HepG2 (cell line): ENCODE measurements at regions of chr2 and their contacts with region 1.

Region 1: DNA sequence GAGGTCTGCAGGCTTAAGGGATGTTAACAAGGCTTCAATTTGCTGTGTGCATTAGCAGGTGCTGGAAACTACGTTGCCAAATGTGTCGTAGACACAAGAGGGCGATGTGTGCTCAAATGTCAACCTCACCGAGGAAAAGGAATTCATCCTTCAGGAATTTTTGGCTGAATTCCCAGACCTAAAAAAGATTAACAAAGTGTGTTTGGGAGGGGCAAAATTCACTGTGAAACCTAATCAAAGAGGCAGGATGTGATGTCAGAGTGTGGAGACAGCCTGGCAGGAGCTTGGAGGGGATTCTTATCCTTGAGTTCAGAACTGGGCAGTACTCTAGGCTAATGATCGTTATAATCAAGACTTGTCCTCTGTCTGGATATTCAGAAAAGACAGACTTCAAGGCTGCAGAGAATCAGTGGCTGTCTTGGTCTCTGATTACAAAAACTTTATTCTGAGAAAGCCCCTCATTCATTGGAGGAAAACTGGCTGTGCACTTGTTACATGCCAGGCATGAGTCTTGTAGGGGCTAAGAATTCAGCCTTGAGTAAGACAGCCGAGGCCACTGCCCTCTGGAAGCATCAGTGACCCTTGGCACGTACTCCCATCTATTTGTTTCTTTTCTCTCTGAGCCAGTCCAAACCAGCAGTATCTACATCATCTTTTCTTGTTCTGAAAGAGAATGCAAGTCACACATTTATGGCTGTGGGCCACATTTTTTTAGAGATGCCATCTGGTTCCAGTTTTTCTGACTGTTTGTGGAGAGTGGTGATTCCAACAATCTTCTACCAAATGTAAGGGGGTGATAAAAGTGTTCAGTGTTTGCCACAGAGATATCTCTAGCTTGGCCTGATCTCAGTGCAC is 18.7 kb upstream of the SCYGR1 start:
- DNase-seq: peak; percentile 99
- ATAC-seq: peak; percentile 93
- H3K4me3 ChIP-seq: peak overlapping the region in 2 of 3 experiments; percentile 2 to 24; a peak in 1 of 6 replicates
- H3K27ac ChIP-seq: peak overlapping the region; percentile 51
- H3K4me1 ChIP-seq: peaks cover 20% of the 10 kb centered on the region
- H3K27me3 ChIP-seq: peaks cover 0 to 4% of the 10 kb centered on the region in 2 experiments; a peak in 1 of 5 replicates
- CTCF ChIP-seq: peak; percentile 98
- EP300 ChIP-seq: peak in 1 of 2 experiments; percentile 82; a peak in 2 of 4 replicates
- POLR2A ChIP-seq: peak in 1 of 2 experiments; percentile 29; a peak in 1 of 4 replicates
- RAD21 ChIP-seq: peak; percentile 97

Region 2: DNA sequence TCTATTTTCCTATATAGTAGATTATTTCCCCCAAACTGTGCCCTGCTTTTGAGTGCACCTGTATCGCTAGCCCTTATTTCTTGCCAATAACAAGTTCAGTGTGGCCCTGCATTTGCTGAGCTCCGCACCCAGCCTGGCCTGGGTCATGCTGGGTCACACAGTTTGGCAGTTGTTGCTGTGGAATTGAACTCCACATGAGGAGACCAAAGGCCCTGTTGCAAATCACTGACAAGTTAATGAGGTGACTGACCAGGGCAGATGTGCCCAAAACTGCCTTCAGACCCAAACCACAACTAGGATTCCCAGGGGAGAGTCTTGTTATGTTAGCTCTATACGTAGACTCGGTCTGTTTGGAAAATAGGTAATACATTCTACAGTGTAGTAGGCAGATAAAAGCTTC is 273.4 kb before region 1 on chr2:
- CTCF ChIA-PET with region 1: no interaction called
- POLR2A ChIA-PET with region 1: no interaction called
- in situ Hi-C with region 1: no loop called
- intact Hi-C with region 1: loop called (anchors 2 kb)
- DNase-seq: no peak
- ATAC-seq: no peak
- H3K4me3 ChIP-seq: no peak overlapping the region
- H3K27ac ChIP-seq: no peak overlapping the region
- H3K4me1 ChIP-seq: no peaks in the 10 kb centered on the region
- H3K27me3 ChIP-seq: peaks cover 2 to 54% of the 10 kb centered on the region in 2 experiments; a peak in 3 of 5 replicates
- CTCF ChIP-seq: no peak
- EP300 ChIP-seq: no peak
- POLR2A ChIP-seq: no peak
- RAD21 ChIP-seq: no peak

Region 3: GRCh38 chr2:227450926-227451654 is 44.7 kb after region 1 on chr2:
- CTCF ChIA-PET with region 1: interaction called, 3 read pairs
- POLR2A ChIA-PET with region 1: no interaction called
- in situ Hi-C with region 1: no loop called
- intact Hi-C with region 1: loop called (anchors 1 kb)
- DNase-seq: peak; percentile 99
- ATAC-seq: peak; percentile 93
- H3K4me3 ChIP-seq: peak overlapping the region in 1 of 3 experiments; percentile 17; a peak in 1 of 6 replicates
- H3K27ac ChIP-seq: peak overlapping the region; percentile 90
- H3K4me1 ChIP-seq: peaks cover 84% of the 10 kb centered on the region
- H3K27me3 ChIP-seq: no peaks in the 10 kb centered on the region
- CTCF ChIP-seq: no peak
- EP300 ChIP-seq: peak; percentile 92 to 98
- POLR2A ChIP-seq: peak in 1 of 2 experiments; percentile 50; a peak in 1 of 4 replicates
- RAD21 ChIP-seq: no peak; the same call in 1 of the 2 replicates

Region 4: DNA sequence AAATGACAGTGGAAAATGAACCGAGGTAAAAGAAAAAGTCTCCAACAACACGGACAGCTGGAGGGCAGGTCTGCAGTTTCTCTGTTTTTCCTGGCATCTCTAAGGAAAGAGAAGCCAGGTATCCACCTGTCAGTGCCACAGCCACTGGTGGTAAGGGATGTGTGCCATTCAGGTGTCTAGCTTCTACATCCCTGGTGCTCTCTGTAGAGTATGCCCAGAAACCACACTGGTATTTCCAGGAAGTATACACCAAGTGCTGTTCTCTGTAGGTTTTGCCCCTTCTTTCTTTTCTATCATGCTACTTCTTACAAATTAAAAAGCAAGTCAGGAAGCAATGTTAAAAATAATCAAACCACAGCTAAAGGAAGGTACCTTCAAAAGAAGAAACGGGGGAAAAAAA is 58.0 kb after region 1 on chr2:
- CTCF ChIA-PET with region 1: no interaction called
- POLR2A ChIA-PET with region 1: interaction called, 6 read pairs
- in situ Hi-C with region 1: loop called (anchors 5 kb)
- intact Hi-C with region 1: loop called (anchors 1 kb)
- DNase-seq: no peak
- ATAC-seq: no peak
- H3K4me3 ChIP-seq: no peak overlapping the region
- H3K27ac ChIP-seq: no peak overlapping the region
- H3K4me1 ChIP-seq: peaks cover 71% of the 10 kb centered on the region
- H3K27me3 ChIP-seq: no peaks in the 10 kb centered on the region
- CTCF ChIP-seq: no peak
- EP300 ChIP-seq: no peak
- POLR2A ChIP-seq: no peak
- RAD21 ChIP-seq: no peak

Region 5: DNA sequence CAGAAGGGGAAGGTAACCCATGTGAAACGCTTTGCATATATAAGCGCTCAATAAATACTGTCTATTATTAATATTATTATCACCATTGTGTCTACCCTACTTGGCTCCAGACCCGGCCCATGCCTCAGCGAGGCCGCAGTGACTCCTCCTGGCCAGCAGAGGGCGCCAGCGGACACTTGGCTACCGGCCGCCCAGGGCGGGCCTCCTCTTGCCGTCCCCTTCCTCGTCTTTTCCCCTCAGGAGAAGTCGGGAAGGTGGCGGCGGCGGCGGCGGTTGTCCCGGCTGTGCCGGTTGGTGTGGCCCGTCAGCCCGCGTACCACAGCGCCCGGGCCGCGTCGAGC is 65.5 kb after region 1 on chr2 and contains the start of gene AGFG1:
- CTCF ChIA-PET with region 1: interaction called, 11 read pairs
- POLR2A ChIA-PET with region 1: interaction called, 6 read pairs
- in situ Hi-C with region 1: loop called (anchors 5 kb)
- intact Hi-C with region 1: loop called (anchors 1 kb)
- DNase-seq: peak; percentile 76
- ATAC-seq: peak; percentile 81
- H3K4me3 ChIP-seq: peak within 1 kb of the TSS; percentile 94 to 98 (median 97)
- H3K27ac ChIP-seq: peak within 1 kb of the TSS; percentile 81
- H3K4me1 ChIP-seq: peaks cover 56% of the 10 kb centered on the region
- H3K27me3 ChIP-seq: no peaks in the 10 kb centered on the region; a peak in 1 of 5 replicates
- CTCF ChIP-seq: peak; percentile 95
- EP300 ChIP-seq: 0 out of 4 replicates have a peak, but pooled peaks of 1 of the 2 experiments have one; percentile 24
- POLR2A ChIP-seq: peak; percentile 63 to 76; a peak in 3 of 4 replicates
- RAD21 ChIP-seq: peak; percentile 83
- total RNA-seq, gene AGFG1: 145 and 187 TPM in 2 replicates

Region 6: GRCh38 chr2:227482638-227483340 is 76.4 kb after region 1 on chr2:
- CTCF ChIA-PET with region 1: no interaction called
- POLR2A ChIA-PET with region 1: no interaction called
- in situ Hi-C with region 1: no loop called
- intact Hi-C with region 1: no loop called
- DNase-seq: no peak
- ATAC-seq: no peak
- H3K4me3 ChIP-seq: no peak overlapping the region
- H3K27ac ChIP-seq: no peak overlapping the region
- H3K4me1 ChIP-seq: peaks cover 28% of the 10 kb centered on the region
- H3K27me3 ChIP-seq: no peaks in the 10 kb centered on the region
- CTCF ChIP-seq: no peak
- EP300 ChIP-seq: no peak
- POLR2A ChIP-seq: no peak
- RAD21 ChIP-seq: no peak

Region 7: GRCh38 chr2:227566012-227566411 is 159.6 kb after region 1 on chr2:
- CTCF ChIA-PET with region 1: no interaction called
- POLR2A ChIA-PET with region 1: no interaction called
- in situ Hi-C with region 1: no loop called
- intact Hi-C with region 1: loop called (anchors 1 kb)
- DNase-seq: no peak
- ATAC-seq: peak; percentile 40
- H3K4me3 ChIP-seq: no peak overlapping the region
- H3K27ac ChIP-seq: no peak overlapping the region
- H3K4me1 ChIP-seq: peaks cover 10% of the 10 kb centered on the region
- H3K27me3 ChIP-seq: no peaks in the 10 kb centered on the region
- CTCF ChIP-seq: no peak
- EP300 ChIP-seq: no peak
- POLR2A ChIP-seq: no peak
- RAD21 ChIP-seq: no peak

Region 8: DNA sequence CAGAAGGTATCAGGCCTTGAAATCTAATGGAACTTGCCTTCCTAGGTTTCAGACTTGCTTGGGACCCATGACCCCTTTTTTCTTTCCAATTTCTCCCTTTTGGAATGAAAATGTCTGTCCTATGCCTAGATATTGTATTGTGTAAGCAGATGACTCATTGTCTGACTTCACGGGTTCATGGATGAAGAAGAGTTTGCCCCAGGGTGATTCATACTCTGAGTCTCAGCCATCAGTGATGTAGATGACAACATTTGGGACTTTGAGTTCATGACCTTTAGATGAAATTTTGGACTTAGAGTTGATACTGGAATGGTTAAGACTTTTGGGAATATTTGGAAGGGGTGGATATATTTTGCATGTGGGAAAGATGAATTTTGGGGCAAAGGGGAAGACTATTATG is 249.1 kb after region 1 on chr2:
- CTCF ChIA-PET with region 1: no interaction called
- POLR2A ChIA-PET with region 1: no interaction called
- in situ Hi-C with region 1: loop called (anchors 10 kb)
- intact Hi-C with region 1: loop called (anchors 5 kb)
- DNase-seq: peak; percentile 87
- ATAC-seq: peak; percentile 70
- H3K4me3 ChIP-seq: no peak overlapping the region
- H3K27ac ChIP-seq: no peak overlapping the region
- H3K4me1 ChIP-seq: peaks cover 46% of the 10 kb centered on the region
- H3K27me3 ChIP-seq: no peaks in the 10 kb centered on the region
- CTCF ChIP-seq: no peak
- EP300 ChIP-seq: peak in 1 of 2 experiments; percentile 57; a peak in 2 of 4 replicates
- POLR2A ChIP-seq: no peak
- RAD21 ChIP-seq: no peak